ENCODE measurements at regions of chr17 and their contacts with region 1.

Region 1: GRCh38 chr17:78774956-78775571 is 7.0 kb downstream of the CYTH1 start:
- DNase-seq: peak; percentile 66
- H3K4me3 Mint-ChIP-seq: peak overlapping the region; percentile 90
- H3K27ac Mint-ChIP-seq: peak overlapping the region; percentile 99
- H3K4me1 Mint-ChIP-seq: peaks cover 68% of the 10 kb centered on the region
- H3K27me3 Mint-ChIP-seq: no peaks in the 10 kb centered on the region

Region 2: DNA sequence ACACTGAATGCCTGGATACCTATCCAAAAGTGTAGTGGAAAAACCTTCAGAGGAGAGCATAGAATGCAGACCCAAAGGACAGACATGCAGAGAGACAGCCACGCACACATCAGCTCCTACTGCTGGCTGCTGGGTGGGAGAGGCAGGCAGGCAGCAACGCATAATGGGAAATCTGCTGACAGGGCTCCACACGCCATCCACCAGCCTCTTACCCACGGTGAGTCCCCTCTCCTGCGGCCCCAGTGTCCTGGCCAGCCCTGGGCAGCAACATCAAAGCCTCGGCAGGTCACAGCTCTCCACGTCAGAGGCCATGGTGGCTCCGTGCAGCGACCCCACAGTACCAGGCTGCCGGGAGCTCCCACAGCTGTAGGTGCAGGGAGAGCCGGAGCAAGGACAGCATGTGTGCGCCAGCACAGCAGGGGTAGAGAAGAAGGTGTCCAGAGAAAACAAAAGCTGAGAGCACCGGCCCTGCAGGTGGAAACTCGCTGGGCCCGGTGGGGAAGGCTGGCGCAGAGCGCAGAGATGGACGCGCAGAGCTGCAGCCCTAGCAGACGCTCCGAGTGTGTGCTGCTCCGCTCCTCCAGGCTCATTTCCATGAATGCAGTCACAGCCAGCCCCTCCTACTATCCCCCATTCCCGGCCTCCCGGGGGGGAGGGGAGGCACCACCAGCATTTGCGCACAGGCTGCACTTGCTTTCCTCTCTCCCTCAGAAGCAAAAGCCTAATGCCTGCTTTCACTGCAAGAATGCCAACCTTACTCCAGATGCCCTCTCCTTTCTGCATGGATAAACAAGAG is 51.9 kb before region 1 on chr17:
- intact Hi-C with region 1: loop called (anchors 2 kb)
- DNase-seq: no peak
- H3K4me3 Mint-ChIP-seq: no peak overlapping the region
- H3K27ac Mint-ChIP-seq: peak overlapping the region; percentile 45
- H3K4me1 Mint-ChIP-seq: peaks cover 75% of the 10 kb centered on the region
- H3K27me3 Mint-ChIP-seq: no peaks in the 10 kb centered on the region

Region 3: DNA sequence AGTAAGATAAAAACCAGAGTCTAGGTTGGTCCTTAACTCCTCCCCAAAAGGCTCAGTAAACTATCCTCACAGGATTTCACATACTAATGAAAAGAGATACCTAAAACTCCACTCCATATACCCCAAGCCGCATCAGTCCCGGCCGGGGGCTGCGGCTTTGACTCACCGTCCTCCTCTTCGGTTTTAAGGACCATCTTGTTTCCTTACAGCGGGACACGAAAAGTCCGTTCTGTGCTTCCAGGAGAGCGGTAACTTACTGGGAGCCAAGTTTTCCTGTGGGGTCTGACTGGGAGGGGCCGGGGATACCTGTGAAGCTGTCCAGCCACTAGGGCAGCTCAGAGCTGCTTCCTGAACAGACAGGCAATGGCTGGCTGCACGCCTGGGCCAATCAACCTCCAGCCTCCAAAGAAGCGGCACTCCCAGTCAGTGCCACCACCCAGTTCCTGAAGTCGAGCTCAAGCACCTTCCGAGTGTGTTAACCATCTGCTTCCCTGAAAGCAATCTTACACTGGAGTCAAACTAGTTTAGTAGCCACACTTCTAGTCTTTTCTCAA is 38.5 kb before region 1 on chr17:
- intact Hi-C with region 1: loop called (anchors 5 kb)
- DNase-seq: peak; percentile 62
- H3K4me3 Mint-ChIP-seq: peak overlapping the region; percentile 84
- H3K27ac Mint-ChIP-seq: peak overlapping the region; percentile 89
- H3K4me1 Mint-ChIP-seq: peaks cover 76% of the 10 kb centered on the region
- H3K27me3 Mint-ChIP-seq: no peaks in the 10 kb centered on the region

Region 4: GRCh38 chr17:78759203-78759968 is 15.7 kb before region 1 on chr17:
- intact Hi-C with region 1: loop called (anchors 1 kb)
- DNase-seq: peak; percentile 61
- H3K4me3 Mint-ChIP-seq: peak overlapping the region; percentile 61
- H3K27ac Mint-ChIP-seq: peak overlapping the region; percentile 91
- H3K4me1 Mint-ChIP-seq: peaks cover 65% of the 10 kb centered on the region
- H3K27me3 Mint-ChIP-seq: no peaks in the 10 kb centered on the region

Region 5: GRCh38 chr17:78849026-78849425 is 74.0 kb after region 1 on chr17:
- intact Hi-C with region 1: no loop called
- DNase-seq: no peak
- H3K4me3 Mint-ChIP-seq: no peak overlapping the region
- H3K27ac Mint-ChIP-seq: no peak overlapping the region
- H3K4me1 Mint-ChIP-seq: peaks cover 6% of the 10 kb centered on the region
- H3K27me3 Mint-ChIP-seq: peaks cover 6% of the 10 kb centered on the region

Region 6: DNA sequence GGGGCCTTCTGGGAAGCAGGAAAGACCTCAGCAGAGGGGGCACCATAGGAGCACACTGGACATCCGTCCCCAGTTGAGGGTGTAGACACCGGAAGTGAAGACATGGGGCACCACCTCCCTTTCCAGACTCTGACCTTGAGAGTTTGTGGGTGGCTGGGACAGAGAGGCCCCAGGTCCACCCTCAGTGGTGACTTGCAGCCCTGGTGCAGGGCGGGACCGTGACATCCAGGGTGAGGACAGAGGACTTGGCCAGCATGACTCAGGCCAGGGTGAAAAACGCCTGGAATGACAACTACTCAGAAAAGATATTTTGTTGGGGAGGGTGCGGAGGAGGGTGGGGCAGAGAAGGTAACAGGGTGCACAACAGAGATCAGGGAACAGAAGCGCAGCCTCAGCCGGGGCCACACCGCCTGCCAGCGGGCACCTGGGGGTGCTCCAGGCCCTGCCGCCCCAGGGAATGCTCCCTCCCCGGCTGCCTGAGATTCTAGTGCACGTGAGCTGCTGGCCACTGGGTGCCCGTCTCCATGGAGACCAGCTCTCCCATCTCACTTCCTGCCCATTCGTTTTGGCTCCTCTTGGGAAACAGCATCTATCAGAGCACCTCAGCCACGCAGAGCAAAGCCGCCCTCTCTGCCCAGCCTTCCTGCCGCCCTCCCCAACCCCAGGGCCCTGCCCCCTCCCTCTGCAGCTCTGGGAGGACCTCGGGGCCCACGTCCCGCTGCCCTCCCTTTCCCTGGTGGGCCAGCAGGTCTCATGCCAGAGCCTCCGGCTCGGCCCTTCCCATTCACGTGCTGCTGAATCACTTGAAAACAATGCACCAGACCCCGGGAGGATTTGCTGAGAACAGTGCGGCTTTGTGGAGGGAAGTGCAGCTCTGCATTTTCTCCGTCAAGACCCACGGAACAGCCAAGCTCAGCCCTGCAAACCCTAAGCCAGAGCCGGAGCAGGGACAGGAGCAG is 108.4 kb after region 1 on chr17:
- intact Hi-C with region 1: no loop called
- DNase-seq: no peak
- H3K4me3 Mint-ChIP-seq: no peak overlapping the region
- H3K27ac Mint-ChIP-seq: peak overlapping the region; percentile 65
- H3K4me1 Mint-ChIP-seq: peaks cover 22% of the 10 kb centered on the region
- H3K27me3 Mint-ChIP-seq: peaks cover 10% of the 10 kb centered on the region

Measured in activated T-helper 1 cell treated with anti-CD3 and anti-CD28 coated beads, Interleukin-12 subunit alpha, Interleukin-12 subunit beta, Interleukin-2, Interleukin-4 antibody, amounts not matched to agents 30 ng/mL and 10 ng/mL and 1 ng/mL, durations not matched to agents 14 hours and 24 hours and 36 hours (primary cell).